OCI-LY7 (cell line): ENCODE measurements at regions of chr3 and their contacts with region 1.

Region 1: DNA sequence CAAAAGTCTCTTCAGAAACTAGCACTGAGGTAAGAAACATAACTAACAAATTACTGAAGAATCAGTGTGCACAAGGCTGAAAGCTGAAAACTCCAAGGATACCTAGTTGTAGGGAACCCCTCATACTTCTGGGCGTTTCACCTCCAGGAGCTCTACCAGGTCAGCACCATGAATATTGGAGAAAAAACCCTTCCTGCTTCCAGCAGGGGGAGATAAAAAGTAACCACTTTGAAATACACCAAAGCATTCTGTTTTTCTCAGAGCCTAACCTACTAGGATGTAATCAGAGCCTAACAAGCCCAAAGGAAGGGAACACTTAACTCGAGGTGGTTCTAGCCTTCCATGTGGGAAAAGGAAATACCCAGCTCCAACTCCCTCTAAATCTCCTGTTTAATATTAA is 175.8 kb upstream of the MME start:
- DNase-seq: peak; percentile 66
- H3K4me3 ChIP-seq: no peak overlapping the region
- H3K27ac ChIP-seq: no peak overlapping the region
- H3K4me1 ChIP-seq: peaks cover 12% of the 10 kb centered on the region
- CTCF ChIP-seq: peak; percentile 83

Region 2: GRCh38 chr3:154919226-154919625 is 14.9 kb after region 1 on chr3:
- CTCF ChIA-PET with region 1: no interaction called
- POLR2A ChIA-PET with region 1: no interaction called
- intact Hi-C with region 1: no loop called
- DNase-seq: no peak
- H3K4me3 ChIP-seq: no peak overlapping the region
- H3K27ac ChIP-seq: no peak overlapping the region
- H3K4me1 ChIP-seq: no peaks in the 10 kb centered on the region
- CTCF ChIP-seq: no peak

Region 3: DNA sequence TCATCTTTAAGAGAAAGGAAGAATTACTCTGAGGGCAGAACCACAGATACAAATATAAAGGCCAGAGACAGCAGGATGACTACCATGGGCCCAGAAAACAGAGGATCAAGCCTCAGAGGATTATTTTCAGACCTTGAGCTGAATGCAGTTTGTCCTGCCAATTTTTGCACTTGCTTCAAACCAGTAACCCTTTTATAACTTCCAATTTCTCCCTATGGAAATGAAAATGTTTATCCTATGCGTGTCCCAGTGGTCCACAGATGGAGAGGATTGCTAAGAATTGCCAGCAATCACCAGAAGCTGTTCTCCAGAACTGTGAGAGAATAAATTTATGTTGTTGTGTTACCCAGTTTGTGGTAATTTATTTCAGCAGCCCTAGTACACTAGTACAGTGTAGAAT is 149.4 kb after region 1 on chr3:
- CTCF ChIA-PET with region 1: no interaction called
- POLR2A ChIA-PET with region 1: no interaction called
- intact Hi-C with region 1: no loop called
- DNase-seq: no peak
- H3K4me3 ChIP-seq: no peak overlapping the region
- H3K27ac ChIP-seq: no peak overlapping the region
- H3K4me1 ChIP-seq: peaks cover 6% of the 10 kb centered on the region
- CTCF ChIP-seq: no peak

Region 4: DNA sequence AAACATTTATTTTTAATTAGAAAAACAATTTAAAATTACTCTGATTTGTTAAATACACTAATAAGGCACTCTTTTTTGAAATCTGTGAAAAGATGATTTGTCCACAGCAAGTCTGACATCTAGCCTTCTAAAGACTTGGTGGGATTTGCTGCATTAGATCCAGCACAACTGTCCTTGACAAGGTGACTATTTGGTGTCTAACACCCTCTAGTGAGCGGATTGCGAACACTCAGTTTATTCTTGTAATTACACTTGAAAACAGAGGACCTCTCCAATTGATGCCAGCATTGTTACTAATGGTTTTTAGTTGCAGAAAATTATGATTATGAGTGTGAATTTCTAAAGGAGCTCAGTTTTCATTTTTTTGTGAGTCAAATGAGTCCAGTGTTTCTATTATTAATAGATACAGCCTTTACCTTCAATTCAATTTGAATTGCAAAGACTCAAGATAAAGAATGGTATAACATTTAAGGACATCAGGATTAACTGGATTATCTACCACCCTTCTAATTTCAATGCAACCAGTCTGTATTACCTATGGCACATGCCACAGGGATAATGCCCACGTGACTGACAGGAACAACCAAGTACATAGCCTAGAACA is 418.8 kb after region 1 on chr3:
- CTCF ChIA-PET with region 1: no interaction called
- POLR2A ChIA-PET with region 1: interaction called, 4 read pairs
- intact Hi-C with region 1: loop called (anchors 1 kb)
- DNase-seq: peak; percentile 89
- H3K4me3 ChIP-seq: no peak overlapping the region
- H3K27ac ChIP-seq: no peak overlapping the region
- H3K4me1 ChIP-seq: peaks cover 3% of the 10 kb centered on the region
- CTCF ChIP-seq: peak; percentile 97

Region 5: GRCh38 chr3:155420881-155421486 is 516.7 kb after region 1 on chr3:
- CTCF ChIA-PET with region 1: no interaction called
- POLR2A ChIA-PET with region 1: no interaction called
- intact Hi-C with region 1: no loop called
- DNase-seq: peak; percentile 11
- H3K4me3 ChIP-seq: no peak overlapping the region
- H3K27ac ChIP-seq: no peak overlapping the region
- H3K4me1 ChIP-seq: no peaks in the 10 kb centered on the region
- CTCF ChIP-seq: peak; percentile 48